Prostate gland (tissue), 2 donors: ENCODE measurements at regions of chr2 and their contacts with region 1.

Region 1: GRCh38 chr2:173286153-173286809 is 68.4 kb upstream of the CDCA7 start:
- DNase-seq: no peak
- H3K4me3 ChIP-seq: no peak overlapping the region
- H3K27ac ChIP-seq: no peak overlapping the region
- H3K4me1 ChIP-seq: no peaks in the 10 kb centered on the region
- H3K27me3 ChIP-seq: no peaks in the 10 kb centered on the region
- CTCF ChIP-seq: no peak
- POLR2A ChIP-seq: no peak

Region 2: DNA sequence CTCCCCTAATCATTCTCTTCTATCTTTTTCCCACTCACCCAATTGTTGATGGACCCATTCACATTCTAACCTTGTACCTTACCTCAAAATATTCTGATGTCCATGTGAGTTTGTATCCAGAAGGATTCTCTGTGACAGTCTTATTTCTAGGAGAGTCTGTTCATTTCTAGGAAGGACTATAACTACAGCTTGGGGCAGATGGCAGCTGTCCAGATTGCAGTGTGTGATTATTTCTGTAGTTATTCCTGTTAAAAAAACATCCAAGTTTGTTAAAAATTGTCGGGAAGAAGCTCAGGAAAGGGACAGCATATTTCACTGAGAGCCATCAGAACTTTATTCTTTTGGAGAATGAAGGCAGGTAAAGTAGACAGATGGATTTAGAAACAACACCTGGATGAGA is 408.0 kb before region 1 on chr2:
- intact Hi-C with region 1: no loop called
- DNase-seq: no peak
- H3K4me3 ChIP-seq: no peak overlapping the region
- H3K27ac ChIP-seq: no peak overlapping the region
- H3K4me1 ChIP-seq: no peaks in the 10 kb centered on the region
- H3K27me3 ChIP-seq: no peaks in the 10 kb centered on the region
- CTCF ChIP-seq: no peak
- POLR2A ChIP-seq: no peak

Region 3: GRCh38 chr2:173171924-173172643 is 114.2 kb before region 1 on chr2:
- intact Hi-C with region 1: no loop called
- DNase-seq: no peak
- H3K4me3 ChIP-seq: no peak overlapping the region
- H3K27ac ChIP-seq: no peak overlapping the region
- H3K4me1 ChIP-seq: no peaks in the 10 kb centered on the region
- H3K27me3 ChIP-seq: no peaks in the 10 kb centered on the region
- CTCF ChIP-seq: no peak
- POLR2A ChIP-seq: no peak

Region 4: DNA sequence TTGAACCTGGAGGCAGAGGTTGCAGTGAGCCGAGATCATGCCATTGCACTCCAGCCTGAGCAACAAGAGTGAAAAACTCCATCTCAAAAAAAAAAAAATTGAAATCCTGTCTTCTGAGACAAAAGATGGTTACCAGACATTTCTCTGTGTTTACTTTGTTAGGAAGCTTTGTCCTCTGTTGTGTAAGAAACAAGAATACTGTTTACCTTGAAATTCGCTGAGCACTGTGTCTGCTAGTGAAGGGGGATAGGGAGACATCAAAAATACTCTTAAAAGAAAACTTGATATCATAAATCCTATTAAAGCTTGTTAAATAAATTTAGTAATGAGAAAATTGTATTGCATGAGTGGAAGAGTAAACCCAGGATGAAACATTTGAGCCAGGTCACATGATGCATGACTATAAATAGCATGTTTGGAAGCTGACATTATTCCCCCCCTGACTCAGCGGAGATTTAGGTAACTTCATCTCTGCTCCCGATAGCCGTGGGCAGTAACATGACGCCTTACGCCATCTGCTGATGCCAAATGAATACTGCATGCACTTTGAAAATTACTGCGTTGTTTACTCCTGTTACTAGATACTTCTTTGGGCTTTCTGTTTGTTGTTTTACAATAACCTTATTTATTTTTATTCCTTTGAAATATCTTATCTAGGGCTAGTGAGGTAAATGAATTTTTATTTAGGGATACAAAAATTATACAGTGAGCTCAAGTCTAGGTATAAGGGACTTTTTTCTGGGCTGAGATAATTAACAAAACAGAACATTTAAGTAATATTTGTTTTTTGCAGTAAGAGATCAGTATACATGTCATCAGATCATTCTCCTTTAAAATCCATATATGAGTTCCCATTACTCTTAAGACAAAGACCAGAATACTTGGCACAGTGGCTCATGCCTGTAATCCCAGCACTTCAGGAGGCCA is 75.7 kb before region 1 on chr2:
- intact Hi-C with region 1: loop called (anchors 5 kb)
- DNase-seq: peak; percentile 83
- H3K4me3 ChIP-seq: no peak overlapping the region
- H3K27ac ChIP-seq: peak overlapping the region; percentile 50 to 66
- H3K4me1 ChIP-seq: no peaks in the 10 kb centered on the region
- H3K27me3 ChIP-seq: no peaks in the 10 kb centered on the region
- CTCF ChIP-seq: peak; percentile 83 to 92 (median 90)
- POLR2A ChIP-seq: no peak

Region 5: DNA sequence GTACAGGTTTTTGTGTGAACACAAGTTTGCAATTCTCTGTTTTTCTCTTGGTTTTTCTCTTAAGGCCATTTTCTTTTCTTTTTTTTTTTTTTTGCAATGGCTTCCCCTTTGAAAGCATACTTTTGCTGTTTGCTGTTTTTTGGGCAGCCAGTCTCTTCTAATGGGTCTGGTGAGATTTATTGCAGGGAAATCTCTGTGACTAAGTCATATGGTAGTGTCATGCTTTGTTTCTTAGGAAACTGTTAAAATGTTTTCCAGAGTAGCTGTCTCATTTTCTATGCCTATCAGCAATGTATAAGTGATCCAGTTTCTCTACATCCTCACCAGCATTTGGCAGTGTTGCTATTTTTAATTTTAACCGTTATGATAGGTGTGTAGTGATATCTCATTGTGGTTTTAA is 40.5 kb after region 1 on chr2:
- intact Hi-C with region 1: no loop called
- DNase-seq: no peak
- H3K4me3 ChIP-seq: no peak overlapping the region
- H3K27ac ChIP-seq: no peak overlapping the region
- H3K4me1 ChIP-seq: no peaks in the 10 kb centered on the region
- H3K27me3 ChIP-seq: no peaks in the 10 kb centered on the region
- CTCF ChIP-seq: no peak
- POLR2A ChIP-seq: no peak

Region 6: DNA sequence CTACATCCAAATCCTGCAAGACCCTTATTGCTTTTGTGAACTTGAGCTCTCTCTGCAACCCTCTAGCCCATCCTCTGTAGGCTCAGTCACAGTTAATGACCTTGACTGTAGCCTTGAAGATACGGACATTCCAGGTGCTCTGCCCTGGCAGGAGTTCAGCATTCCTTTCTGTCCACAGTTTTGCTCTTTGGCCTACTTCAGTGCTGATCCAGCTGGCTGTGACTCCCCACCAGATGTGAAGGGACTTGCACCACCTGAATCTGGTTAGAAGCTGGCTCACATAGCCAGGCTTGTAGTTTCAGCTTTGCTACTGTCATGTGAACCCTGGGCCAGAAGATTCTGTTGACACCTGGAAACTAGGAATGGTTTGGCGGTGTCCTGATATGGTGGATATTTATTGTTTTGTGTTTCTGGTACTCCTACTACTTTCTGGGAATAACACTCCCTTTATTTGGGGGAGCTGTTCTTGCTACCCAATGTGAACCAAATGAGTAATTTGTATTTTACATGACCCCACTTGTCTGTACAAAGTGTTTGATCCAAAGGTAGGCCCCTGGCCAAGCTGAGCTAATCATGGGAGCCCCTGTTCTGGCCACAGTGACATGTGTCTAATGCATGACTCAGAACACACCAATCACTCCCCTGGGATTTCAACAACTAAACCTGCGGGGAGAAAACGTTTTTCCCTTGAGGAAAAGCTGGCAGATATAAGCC is 141.8 kb after region 1 on chr2:
- intact Hi-C with region 1: no loop called
- DNase-seq: peak; percentile 59
- H3K4me3 ChIP-seq: no peak overlapping the region
- H3K27ac ChIP-seq: no peak overlapping the region
- H3K4me1 ChIP-seq: no peaks in the 10 kb centered on the region
- H3K27me3 ChIP-seq: no peaks in the 10 kb centered on the region
- CTCF ChIP-seq: no peak
- POLR2A ChIP-seq: no peak